ENCODE measurements at regions of chr17 and their contacts with region 1.

Region 1: DNA sequence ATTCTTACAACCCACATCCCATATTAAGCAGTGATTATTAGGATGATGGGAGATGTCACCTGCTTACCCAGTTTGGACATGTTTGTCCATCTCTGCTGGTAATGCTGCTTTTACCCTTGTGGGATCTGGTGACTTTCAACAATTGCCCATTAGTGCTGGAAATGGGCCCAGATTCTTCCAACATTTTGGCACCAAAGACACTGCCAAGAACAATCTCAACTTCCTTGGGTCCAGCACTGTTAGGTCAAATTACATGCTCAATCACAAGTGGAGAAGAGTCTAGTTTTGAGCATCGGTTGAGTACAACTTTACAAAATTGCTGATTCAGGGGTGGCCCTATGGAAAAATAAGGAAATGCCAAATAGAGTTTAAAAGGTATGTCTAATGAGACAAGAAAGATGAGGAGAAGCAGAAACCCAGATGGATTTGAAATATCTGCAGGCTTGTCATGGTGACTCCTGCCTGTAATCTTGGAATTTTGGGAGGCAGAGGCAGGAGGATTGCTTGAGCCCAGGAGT is 13.0 kb upstream of the ZFP3 start:
- DNase-seq: no peak
- H3K4me3 ChIP-seq: no peak overlapping the region
- H3K4me3 Mint-ChIP-seq: peak overlapping the region in 1 of 2 donors; percentile 22
- H3K27ac ChIP-seq: no peak overlapping the region
- H3K27ac Mint-ChIP-seq: no peak overlapping the region
- H3K4me1 ChIP-seq: no peaks in the 10 kb centered on the region
- H3K4me1 Mint-ChIP-seq: peaks cover 3% of the 10 kb centered on the region
- H3K27me3 ChIP-seq: no peaks in the 10 kb centered on the region
- H3K27me3 Mint-ChIP-seq: peaks cover 11 to 13% (median 12%) of the 10 kb centered on the region in 3 donors
- CTCF ChIP-seq: no peak

Region 2: GRCh38 chr17:4903051-4903818 is 162.1 kb before region 1 on chr17 and contains the start of gene CHRNE:
- intact Hi-C with region 1: loop called (anchors 2 to 10 kb)
- DNase-seq: peak; percentile 62 to 78 (median 64)
- H3K4me3 ChIP-seq: peak within 1 kb of the TSS in 1 of 3 experiments; percentile 83
- H3K4me3 Mint-ChIP-seq: peak within 1 kb of the TSS; percentile 62 to 68
- H3K27ac ChIP-seq: peak within 1 kb of the TSS; percentile 33 to 80
- H3K27ac Mint-ChIP-seq: peak within 1 kb of the TSS; percentile 79 to 96 (median 85)
- H3K4me1 ChIP-seq: peaks cover 47 to 53% of the 10 kb centered on the region in 2 donors
- H3K4me1 Mint-ChIP-seq: peaks cover 43% of the 10 kb centered on the region
- H3K27me3 ChIP-seq: peaks cover 0 to 26% of the 10 kb centered on the region in 2 donors
- H3K27me3 Mint-ChIP-seq: peaks cover 38 to 61% (median 60%) of the 10 kb centered on the region in 3 donors
- CTCF ChIP-seq: peak; percentile 91
- polyA plus RNA-seq, gene CHRNE: 0.54 to 12.6 (median 2.1) TPM

Region 3: GRCh38 chr17:4908301-4908700 is 157.0 kb before region 1 on chr17:
- intact Hi-C with region 1: loop called (anchors 2 to 10 kb)
- DNase-seq: no peak
- H3K4me3 ChIP-seq: no peak overlapping the region
- H3K4me3 Mint-ChIP-seq: no peak overlapping the region
- H3K27ac ChIP-seq: no peak overlapping the region
- H3K27ac Mint-ChIP-seq: no peak overlapping the region
- H3K4me1 ChIP-seq: peaks cover 12 to 19% of the 10 kb centered on the region in 2 donors
- H3K4me1 Mint-ChIP-seq: peaks cover 4% of the 10 kb centered on the region
- H3K27me3 ChIP-seq: no peaks in the 10 kb centered on the region
- H3K27me3 Mint-ChIP-seq: peaks cover 9 to 21% (median 20%) of the 10 kb centered on the region in 3 donors
- CTCF ChIP-seq: no peak

Region 4: DNA sequence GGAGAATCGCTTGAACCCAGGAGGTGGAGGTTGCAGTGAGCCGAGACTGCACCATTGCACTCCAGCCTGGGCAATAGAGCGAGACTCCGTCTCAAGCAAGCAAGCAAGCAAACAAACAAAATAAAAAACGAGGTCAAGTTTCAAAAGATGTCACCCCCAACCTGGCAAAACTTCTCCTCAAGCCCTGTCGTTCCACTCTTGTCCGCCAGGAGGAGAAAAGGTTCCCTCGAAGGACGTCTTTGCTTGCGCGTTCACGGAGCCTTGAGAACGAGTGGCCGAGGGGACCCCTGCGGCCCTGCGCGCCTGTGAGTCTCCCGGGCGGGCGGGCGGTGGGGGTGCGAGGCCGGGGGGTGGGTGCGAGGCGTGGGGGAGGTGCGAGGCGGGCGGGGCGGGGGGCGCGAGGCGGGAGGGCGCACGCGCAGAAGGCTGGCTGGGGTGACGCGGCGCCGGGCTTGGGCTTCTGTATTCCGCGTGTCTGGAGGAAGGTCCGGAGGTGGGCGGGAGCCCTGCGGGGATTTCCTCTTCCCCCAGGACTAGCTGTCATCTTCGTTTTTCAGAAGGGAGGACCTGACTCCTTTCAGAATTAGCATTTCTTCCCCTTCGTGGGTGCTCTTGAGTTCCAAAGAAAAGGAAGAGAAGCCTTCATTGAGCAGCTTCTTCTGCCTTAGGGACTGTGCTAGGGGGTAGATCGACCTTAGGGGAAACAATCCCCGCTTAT is 33.8 kb before region 1 on chr17:
- intact Hi-C with region 1: loop called in 1 of 2 experiments (anchors 2 kb)
- DNase-seq: peak; percentile 87 to 92 (median 88)
- H3K4me3 ChIP-seq: peak overlapping the region in 2 of 3 experiments; percentile 27 to 64
- H3K4me3 Mint-ChIP-seq: peak overlapping the region; percentile 73 to 85
- H3K27ac ChIP-seq: peak overlapping the region; percentile 71 to 87
- H3K27ac Mint-ChIP-seq: peak overlapping the region; percentile 92 to 98 (median 94)
- H3K4me1 ChIP-seq: peaks cover 21 to 26% of the 10 kb centered on the region in 2 donors
- H3K4me1 Mint-ChIP-seq: peaks cover 30% of the 10 kb centered on the region
- H3K27me3 ChIP-seq: peaks cover 2 to 17% of the 10 kb centered on the region in 2 donors
- H3K27me3 Mint-ChIP-seq: peaks cover 13 to 31% (median 23%) of the 10 kb centered on the region in 3 donors
- CTCF ChIP-seq: peak; percentile 75

Region 5: GRCh38 chr17:5135726-5136579 is 70.7 kb after region 1 on chr17:
- intact Hi-C with region 1: no loop called
- DNase-seq: no peak
- H3K4me3 ChIP-seq: no peak overlapping the region
- H3K4me3 Mint-ChIP-seq: no peak overlapping the region
- H3K27ac ChIP-seq: no peak overlapping the region
- H3K27ac Mint-ChIP-seq: no peak overlapping the region
- H3K4me1 ChIP-seq: no peaks in the 10 kb centered on the region
- H3K4me1 Mint-ChIP-seq: peaks cover 4% of the 10 kb centered on the region
- H3K27me3 ChIP-seq: no peaks in the 10 kb centered on the region
- H3K27me3 Mint-ChIP-seq: peaks cover 2 to 3% (median 2%) of the 10 kb centered on the region in 3 donors
- CTCF ChIP-seq: no peak

Region 6: DNA sequence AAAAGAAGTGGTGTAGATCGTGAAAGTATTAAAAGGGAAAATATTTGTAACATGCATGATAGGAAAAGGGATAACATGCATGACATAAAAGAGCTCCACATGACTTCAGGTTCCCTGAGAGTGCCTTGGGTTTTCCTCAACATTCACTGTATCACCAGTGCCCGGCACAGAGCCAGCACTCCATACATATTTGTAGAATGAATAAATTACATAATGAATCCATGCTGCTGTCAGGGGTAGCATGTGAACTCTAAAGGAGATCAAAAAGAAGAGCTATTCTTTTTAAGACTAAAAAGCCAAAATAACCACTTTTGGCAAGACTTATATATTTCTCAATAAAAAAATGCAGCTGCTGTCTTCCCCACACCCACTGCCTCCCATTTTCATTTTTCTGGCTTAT is 129.1 kb after region 1 on chr17:
- intact Hi-C with region 1: no loop called
- DNase-seq: no peak
- H3K4me3 ChIP-seq: no peak overlapping the region
- H3K4me3 Mint-ChIP-seq: no peak overlapping the region
- H3K27ac ChIP-seq: no peak overlapping the region
- H3K27ac Mint-ChIP-seq: no peak overlapping the region
- H3K4me1 ChIP-seq: peaks cover 12 to 22% of the 10 kb centered on the region in 2 donors
- H3K4me1 Mint-ChIP-seq: peaks cover 20% of the 10 kb centered on the region
- H3K27me3 ChIP-seq: no peaks in the 10 kb centered on the region
- H3K27me3 Mint-ChIP-seq: no peaks in the 10 kb centered on the region
- CTCF ChIP-seq: no peak